Calu3 (cell line): ENCODE measurements at regions of chr1 and their contacts with region 1.

Region 1: GRCh38 chr1:168907053-168907452 is 178.0 kb upstream of the DPT start:
- DNase-seq: peak; percentile 61
- H3K4me3 Mint-ChIP-seq: peak overlapping the region; percentile 36
- H3K27ac Mint-ChIP-seq: peak overlapping the region; percentile 98
- H3K4me1 Mint-ChIP-seq: peaks cover 53% of the 10 kb centered on the region
- H3K27me3 Mint-ChIP-seq: no peaks in the 10 kb centered on the region
- CTCF ChIP-seq: no peak

Region 2: DNA sequence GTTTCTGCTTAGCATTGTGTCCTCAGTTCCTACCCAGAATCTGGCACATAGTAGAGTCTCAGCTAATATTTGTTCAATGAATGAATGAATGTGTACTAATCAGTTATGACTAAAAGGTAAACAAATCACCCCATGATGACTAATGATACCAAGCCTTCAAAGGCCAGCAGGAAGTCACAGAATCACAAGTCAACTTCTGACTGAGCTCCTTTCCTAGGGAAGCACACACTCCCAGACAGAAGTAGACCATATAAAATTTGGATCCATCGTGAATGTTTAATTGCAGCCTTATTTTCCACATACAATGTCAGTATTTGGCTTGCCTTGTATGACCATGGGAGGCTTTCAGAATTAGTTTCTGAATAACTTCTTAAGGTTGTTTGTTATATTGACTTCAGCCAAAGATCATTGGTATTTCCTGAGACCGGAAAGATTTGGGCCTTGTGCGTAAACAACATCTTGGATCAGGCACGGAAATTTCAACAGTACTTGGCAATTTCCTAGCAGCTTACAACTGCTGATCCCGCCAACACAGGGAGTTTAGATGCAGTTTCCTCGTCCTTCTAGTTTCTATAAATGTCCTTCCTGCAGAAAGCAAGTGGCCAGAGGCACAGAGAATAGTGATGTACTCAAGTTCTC is 13.5 kb after region 1 on chr1:
- CTCF ChIA-PET with region 1: interaction called, 38 read pairs
- intact Hi-C with region 1: loop called (anchors 1 kb)
- DNase-seq: peak; percentile 64
- H3K4me3 Mint-ChIP-seq: peak overlapping the region; percentile 42
- H3K27ac Mint-ChIP-seq: peak overlapping the region; percentile 94
- H3K4me1 Mint-ChIP-seq: peaks cover 70% of the 10 kb centered on the region
- H3K27me3 Mint-ChIP-seq: no peaks in the 10 kb centered on the region
- CTCF ChIP-seq: no peak

Region 3: DNA sequence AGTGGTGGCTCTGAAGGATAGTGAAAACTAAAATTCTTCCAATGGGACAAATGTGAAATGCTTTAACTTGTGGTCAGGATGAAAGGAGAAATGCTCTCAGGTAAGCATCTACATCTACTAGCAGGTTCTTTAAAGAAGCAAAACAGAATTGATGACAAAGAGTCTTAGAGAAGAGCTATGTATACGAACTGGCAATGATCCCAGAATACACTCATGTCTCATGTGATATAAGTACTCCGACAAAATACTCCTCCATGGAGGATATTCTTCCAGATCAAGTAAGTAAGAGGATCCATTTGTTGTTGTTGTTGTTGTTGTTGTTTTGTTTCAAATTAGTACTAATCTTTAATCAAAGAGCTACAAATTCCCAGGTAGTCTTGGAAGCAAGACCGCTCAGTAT is 25.5 kb after region 1 on chr1:
- CTCF ChIA-PET with region 1: no interaction called
- intact Hi-C with region 1: no loop called
- DNase-seq: no peak
- H3K4me3 Mint-ChIP-seq: no peak overlapping the region
- H3K27ac Mint-ChIP-seq: no peak overlapping the region
- H3K4me1 Mint-ChIP-seq: no peaks in the 10 kb centered on the region
- H3K27me3 Mint-ChIP-seq: no peaks in the 10 kb centered on the region
- CTCF ChIP-seq: no peak

Region 4: DNA sequence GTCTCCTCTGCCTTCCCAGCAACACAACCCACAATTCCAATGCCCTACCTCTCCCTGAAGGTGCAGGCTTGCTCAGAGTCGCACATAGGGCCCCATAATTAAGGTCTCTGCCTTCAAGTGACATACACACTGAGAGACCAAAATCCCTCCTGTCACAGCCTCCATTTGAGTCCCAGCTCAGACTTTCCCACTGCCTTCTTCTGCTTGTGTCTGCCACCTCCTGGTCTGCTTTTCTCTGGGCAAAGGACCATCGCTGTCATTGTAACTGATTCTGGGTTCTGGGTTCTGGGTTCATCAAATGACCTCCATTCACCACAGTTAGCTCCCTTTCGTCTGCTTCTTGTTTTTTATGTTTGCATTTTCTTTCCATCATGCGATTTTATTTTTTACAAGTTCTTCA is 80.3 kb after region 1 on chr1:
- CTCF ChIA-PET with region 1: no interaction called
- intact Hi-C with region 1: no loop called
- DNase-seq: no peak
- H3K4me3 Mint-ChIP-seq: no peak overlapping the region
- H3K27ac Mint-ChIP-seq: no peak overlapping the region
- H3K4me1 Mint-ChIP-seq: no peaks in the 10 kb centered on the region
- H3K27me3 Mint-ChIP-seq: no peaks in the 10 kb centered on the region
- CTCF ChIP-seq: no peak